ENCODE measurements at regions of chr20 and their contacts with region 1.

Region 1: GRCh38 chr20:4720041-4720976 is 1.4 kb upstream of the PRND start:
- DNase-seq: peak; percentile 65 to 84 (median 79)
- ATAC-seq: peak; percentile 80 to 90 (median 85)
- H3K4me3 ChIP-seq: peak overlapping the region in 1 of 12 donors; percentile 15
- H3K27ac ChIP-seq: peak overlapping the region; percentile 27 to 90 (median 48)
- H3K4me1 ChIP-seq: peaks cover 0 to 19% (median 5%) of the 10 kb centered on the region in 12 donors
- H3K27me3 ChIP-seq: no peaks in the 10 kb centered on the region
- CTCF ChIP-seq: peak; percentile 40 to 84 (median 73)
- POLR2A ChIP-seq: no peak

Region 2: GRCh38 chr20:4108495-4109306 is 611.6 kb before region 1 on chr20:
- intact Hi-C with region 1: loop called in 1 of 10 experiments (anchors 10 kb)
- DNase-seq: peak in 4 of 5 donors; percentile 52 to 66 (median 60)
- ATAC-seq: peak; percentile 84 to 91 (median 88)
- H3K4me3 ChIP-seq: no peak overlapping the region
- H3K27ac ChIP-seq: no peak overlapping the region
- H3K4me1 ChIP-seq: peaks cover 0 to 24% (median 7%) of the 10 kb centered on the region in 12 donors
- H3K27me3 ChIP-seq: no peaks in the 10 kb centered on the region
- CTCF ChIP-seq: peak; percentile 90 to 99 (median 97)
- POLR2A ChIP-seq: no peak

Region 3: GRCh38 chr20:4256874-4257273 is 463.4 kb before region 1 on chr20:
- intact Hi-C with region 1: loop called in 1 of 10 experiments (anchors 10 kb)
- DNase-seq: peak in 1 of 5 donors; percentile 39
- ATAC-seq: peak in 2 of 4 donors; percentile 51 to 75
- H3K4me3 ChIP-seq: no peak overlapping the region
- H3K27ac ChIP-seq: no peak overlapping the region
- H3K4me1 ChIP-seq: peaks cover 0 to 9% (median 0%) of the 10 kb centered on the region in 12 donors
- H3K27me3 ChIP-seq: peaks cover 0 to 14% (median 0%) of the 10 kb centered on the region in 9 donors
- CTCF ChIP-seq: no peak
- POLR2A ChIP-seq: no peak

Region 4: GRCh38 chr20:4607287-4607713 is 113.0 kb before region 1 on chr20:
- intact Hi-C with region 1: loop called (anchors 1 to 2 kb)
- DNase-seq: peak in 3 of 5 donors; percentile 39 to 44 (median 41)
- ATAC-seq: peak; percentile 69 to 78 (median 76)
- H3K4me3 ChIP-seq: no peak overlapping the region
- H3K27ac ChIP-seq: no peak overlapping the region
- H3K4me1 ChIP-seq: peaks cover 0 to 7% (median 0%) of the 10 kb centered on the region in 12 donors
- H3K27me3 ChIP-seq: peaks cover 0 to 12% (median 0%) of the 10 kb centered on the region in 9 donors
- CTCF ChIP-seq: peak; percentile 88 to 98 (median 94)
- POLR2A ChIP-seq: no peak

Region 5: DNA sequence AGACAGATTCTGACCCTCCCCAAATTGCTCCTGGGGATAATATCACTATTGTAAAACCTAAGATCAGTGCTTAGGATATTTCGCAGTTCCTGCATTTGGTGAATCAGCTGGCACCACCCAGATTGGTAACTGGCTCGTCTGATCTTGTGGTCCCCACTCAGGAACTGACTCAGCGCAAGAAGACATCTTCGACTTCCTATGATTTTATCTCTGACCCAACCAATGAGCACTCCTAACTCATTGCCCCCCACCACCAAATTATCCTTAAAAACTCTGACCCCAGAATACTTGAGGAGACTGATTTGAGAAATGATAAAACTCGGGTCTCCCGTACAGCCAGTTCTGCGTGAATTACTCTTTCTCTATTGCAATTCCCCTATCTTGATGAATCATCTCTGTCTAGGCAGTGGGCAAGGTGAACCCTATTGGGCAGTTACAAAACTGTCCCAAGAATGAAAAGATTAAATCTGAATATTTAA is 54.3 kb before region 1 on chr20:
- intact Hi-C with region 1: no loop called
- DNase-seq: no peak
- ATAC-seq: peak in 1 of 4 donors; percentile 37
- H3K4me3 ChIP-seq: no peak overlapping the region
- H3K27ac ChIP-seq: peak overlapping the region in 1 of 12 donors; percentile 84
- H3K4me1 ChIP-seq: peaks cover 0 to 39% (median 0%) of the 10 kb centered on the region in 12 donors
- H3K27me3 ChIP-seq: no peaks in the 10 kb centered on the region
- CTCF ChIP-seq: no peak
- POLR2A ChIP-seq: no peak

Measured in heart left ventricle (tissue), 16 donors.